Posterior vena cava (tissue), 2 donors: ENCODE measurements at regions of chr5 and their contacts with region 1.

Region 1: DNA sequence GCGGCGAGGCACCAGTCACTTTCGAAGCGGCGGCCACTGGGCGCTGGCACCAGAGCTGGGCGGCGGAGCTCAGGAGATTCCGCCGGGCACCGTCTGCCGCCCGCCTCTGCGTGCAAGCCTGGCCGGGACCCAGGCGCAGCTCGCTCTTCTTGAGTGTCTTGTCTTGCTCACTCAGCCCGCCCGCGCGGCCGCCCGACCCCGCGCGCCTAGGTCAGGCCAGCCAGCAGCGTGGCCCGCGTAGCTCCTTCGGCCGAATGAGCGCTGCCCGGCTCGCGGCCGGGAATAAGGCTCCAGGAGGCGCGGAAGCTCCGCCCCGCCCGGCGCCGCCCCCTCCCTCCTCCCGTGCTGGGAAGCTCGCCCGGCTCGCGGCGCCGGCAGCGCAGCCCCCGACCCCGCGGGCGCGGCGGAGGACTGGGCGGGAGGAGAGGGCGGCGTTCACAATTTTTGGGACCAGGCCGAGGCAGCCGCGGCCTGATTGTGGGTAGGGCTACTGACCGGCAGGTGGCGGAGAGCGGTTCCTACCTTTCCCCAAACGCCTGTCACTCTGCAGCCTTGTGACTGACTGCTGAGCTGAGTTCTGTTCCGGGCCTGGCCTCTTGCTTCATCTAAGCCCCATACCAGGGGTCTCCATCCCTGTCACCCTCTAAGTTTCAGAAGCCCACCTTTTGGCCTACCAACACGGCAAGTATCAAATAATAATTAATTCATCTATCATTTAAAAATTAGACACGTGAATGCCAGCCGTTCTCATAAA is at the start of gene HBEGF:
- DNase-seq: peak; percentile 91
- total RNA-seq, gene HBEGF: 6.9 to 9.5 TPM

Region 2: GRCh38 chr5:140174465-140175366 is 171.8 kb before region 1 on chr5 and contains the start of gene CYSTM1:
- intact Hi-C with region 1: loop called in 1 of 2 experiments (anchors 10 kb)
- DNase-seq: peak; percentile 99
- total RNA-seq, gene CYSTM1: 46.6 to 80.9 TPM

Region 3: GRCh38 chr5:140244525-140245025 is 102.0 kb before region 1 on chr5:
- intact Hi-C with region 1: loop called (anchors 5 kb)
- DNase-seq: peak; percentile 97

Region 4: DNA sequence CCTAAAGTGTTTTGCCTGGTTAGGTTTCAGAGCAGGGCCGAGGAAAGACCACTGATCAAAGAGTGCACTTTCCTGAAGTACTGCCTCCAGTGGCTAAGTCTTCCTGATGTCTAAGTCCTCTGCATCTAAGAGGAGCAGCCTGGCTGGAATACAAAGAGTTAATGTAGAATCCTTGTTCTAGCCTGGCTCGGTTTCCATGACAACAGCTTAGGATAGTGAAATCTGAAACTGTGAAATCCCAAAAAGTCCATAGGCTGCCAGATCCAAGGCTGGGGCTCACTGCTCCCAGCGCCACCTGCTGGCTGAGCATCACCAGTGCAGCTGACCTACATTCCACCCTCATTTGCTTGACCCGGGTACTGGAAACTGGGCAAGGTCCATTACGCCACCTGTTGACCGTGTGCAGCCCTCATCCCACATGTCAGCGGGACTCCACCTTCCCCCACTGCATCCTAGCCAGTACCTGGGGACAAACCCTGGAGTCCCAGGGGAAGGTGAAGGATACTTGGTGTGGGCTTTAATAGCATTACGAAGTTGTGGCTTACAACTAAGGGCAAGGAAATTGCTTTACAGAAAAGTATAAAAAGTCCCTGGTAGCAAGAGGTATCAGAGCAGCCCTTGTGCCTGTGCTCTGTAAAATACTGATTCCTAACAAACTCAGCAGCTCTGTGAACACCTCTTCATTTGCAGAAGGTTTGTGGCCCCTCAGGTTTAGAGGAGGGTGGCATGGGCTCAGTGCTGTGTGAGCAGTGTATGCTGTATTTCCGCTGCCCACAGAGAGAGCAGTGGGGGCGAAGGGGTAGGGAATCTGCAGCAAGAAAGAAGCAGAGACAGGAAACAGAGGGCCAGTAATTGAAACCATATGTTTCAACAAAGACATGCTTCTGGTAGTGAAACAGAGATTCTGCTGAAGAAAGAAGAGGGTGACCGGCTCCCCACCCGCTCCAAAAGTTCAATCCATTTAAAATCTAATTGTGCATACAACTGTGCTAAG is 1178.4 kb after region 1 on chr5:
- intact Hi-C with region 1: no loop called
- DNase-seq: peak; percentile 93